ENCODE measurements at regions of chr13 and their contacts with region 1.

Region 1: DNA sequence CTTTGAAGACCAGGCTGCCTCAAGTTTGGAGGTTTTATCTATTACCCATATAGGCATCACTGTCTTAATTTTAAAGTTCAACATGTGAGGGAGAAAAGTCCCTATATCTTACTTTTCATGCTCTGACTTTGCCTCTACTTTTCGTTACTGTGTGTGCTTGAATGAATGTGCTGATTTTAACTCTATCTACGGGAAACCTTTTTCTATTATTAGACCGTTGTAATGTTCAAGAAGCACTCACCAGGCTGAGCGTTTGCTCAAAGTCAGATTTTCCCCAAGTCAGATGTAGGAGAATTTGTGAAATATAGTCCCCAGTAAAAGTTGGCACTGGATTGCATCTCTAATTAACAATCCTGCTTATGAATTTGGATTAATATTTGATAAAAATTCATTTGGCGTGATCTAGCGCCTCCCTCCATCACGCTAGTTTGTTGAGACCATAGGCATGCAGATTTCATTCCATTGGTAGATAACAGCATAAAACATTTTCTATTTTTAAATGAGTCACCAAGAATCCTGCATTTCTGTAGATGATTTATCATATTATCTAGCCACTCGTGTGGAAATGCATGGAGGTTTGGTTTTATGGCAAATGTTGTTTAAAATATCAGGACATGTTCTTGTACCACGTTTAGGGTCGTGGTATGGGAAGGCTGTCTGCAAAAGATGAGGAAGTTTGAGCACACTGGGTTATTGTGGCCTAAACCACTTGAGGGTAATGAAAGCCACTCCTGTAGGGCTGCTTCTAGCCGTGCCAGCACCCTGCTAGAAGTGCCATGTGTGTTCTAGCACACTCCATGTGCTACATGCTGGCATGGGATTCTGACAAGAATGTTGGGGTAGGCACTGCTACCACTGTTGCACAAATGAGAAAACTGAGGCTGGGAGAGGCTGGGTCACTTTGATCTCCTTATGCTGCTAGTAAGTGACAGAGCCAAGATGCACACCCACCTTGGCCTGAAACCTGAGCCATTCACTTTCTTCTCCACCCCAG is 179.4 kb downstream of the FGF9 start:
- ATAC-seq: no peak
- H3K4me3 ChIP-seq: no peak overlapping the region
- H3K27ac ChIP-seq: no peak overlapping the region
- H3K4me1 ChIP-seq: no peaks in the 10 kb centered on the region

Region 2: GRCh38 chr13:20728579-20729311 is 1121.6 kb before region 1 on chr13:
- in situ Hi-C with region 1: no loop called
- ATAC-seq: peak in 3 of 8 experiments; percentile 48 to 77 (median 54)
- H3K4me3 ChIP-seq: no peak overlapping the region
- H3K27ac ChIP-seq: no peak overlapping the region
- H3K4me1 ChIP-seq: no peaks in the 10 kb centered on the region

Region 3: DNA sequence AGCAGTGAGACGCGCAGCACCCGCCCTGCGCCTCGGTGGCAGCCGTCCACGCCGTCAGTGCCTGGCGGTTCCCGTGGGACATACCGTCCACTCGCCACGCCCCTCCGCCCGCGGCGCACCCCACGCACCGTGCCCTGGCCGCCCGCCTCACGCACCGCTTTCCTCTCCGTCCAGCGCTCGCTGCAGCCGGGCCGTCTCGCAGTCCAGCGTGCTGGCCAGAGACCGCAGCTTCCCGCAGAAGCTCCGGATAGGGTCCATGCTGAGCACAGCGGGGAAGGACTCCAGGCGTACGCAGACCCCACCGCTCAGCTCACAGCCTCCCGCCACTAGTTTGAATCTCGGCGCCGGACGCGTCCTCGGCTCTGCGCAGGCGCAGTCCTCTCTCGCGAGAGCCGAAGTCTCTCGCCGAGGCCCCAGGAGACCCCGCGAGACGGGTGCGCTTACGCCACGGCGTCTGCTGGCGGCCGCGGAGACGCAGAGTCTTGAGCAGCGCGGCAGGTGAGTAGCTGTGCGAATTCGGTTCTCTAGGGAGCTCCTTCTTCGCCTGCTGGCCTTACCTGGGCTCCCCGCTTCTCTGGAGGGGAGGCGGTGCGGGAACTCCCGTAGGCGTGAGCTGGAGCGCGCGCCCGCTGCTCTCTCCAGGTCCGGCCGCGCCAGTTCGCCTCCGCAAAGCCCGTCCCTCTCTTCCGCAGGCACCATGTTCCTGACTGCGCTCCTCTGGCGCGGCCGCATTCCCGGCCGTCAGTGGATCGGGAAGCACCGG is 673.9 kb before region 1 on chr13 and contains the starts of genes MRPL57 and SKA3:
- in situ Hi-C with region 1: no loop called
- ATAC-seq: peak; percentile 85 to 98 (median 96)
- H3K4me3 ChIP-seq: peak within 1 kb of the TSS; percentile 54 to 93 (median 78)
- H3K27ac ChIP-seq: peak within 1 kb of the TSS; percentile 90 to 94
- H3K4me1 ChIP-seq: peaks cover 6 to 7% of the 10 kb centered on the region in 2 donors
- total RNA-seq, gene MRPL57: 17.7 to 29.7 (median 24.7) TPM
- total RNA-seq, gene SKA3: 0.15 to 16.0 (median 2.2) TPM

Region 4: GRCh38 chr13:21759463-21759862 is 90.8 kb before region 1 on chr13:
- in situ Hi-C with region 1: loop called in 1 of 9 experiments (anchors 25 kb)
- ATAC-seq: no peak
- H3K4me3 ChIP-seq: no peak overlapping the region
- H3K27ac ChIP-seq: no peak overlapping the region
- H3K4me1 ChIP-seq: no peaks in the 10 kb centered on the region